ENCODE measurements at regions of chr5 and their contacts with region 1.

Region 1: DNA sequence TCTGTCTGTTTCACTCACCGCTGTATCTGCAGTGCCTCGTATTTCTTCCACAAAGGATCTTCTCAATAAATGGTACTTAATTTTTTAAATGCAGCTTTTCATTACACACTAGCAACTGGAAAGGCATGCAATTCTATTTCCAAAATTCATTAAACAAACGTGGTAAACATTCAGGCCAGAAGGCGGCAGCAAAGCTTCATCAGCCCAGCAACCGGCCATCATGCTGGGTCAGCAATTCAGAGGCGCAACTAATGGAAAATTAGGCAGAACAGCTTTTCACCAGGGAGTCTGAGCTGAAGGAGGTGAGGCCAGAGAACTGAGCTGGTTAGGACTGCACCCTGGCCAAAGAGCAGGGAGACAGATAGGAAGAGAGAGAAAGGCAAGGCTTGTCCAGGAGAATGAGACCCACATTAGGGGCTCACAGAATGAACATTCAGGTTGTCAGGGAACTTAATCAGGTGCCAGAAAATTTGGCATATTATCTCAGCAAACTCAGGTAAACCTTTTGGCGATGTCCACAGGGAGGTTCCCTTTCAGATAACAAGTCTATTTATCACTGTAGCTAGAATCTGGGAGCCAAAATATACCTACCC is 17.7 kb upstream of the RNF180 start:
- DNase-seq: peak in 9 of 10 donors; percentile 28 to 78 (median 66)
- H3K4me3 ChIP-seq: no peak overlapping the region
- H3K27ac ChIP-seq: no peak overlapping the region
- H3K27me3 ChIP-seq: no peaks in the 10 kb centered on the region
- CTCF ChIP-seq: peak; percentile 33 to 85 (median 72)

Region 2: DNA sequence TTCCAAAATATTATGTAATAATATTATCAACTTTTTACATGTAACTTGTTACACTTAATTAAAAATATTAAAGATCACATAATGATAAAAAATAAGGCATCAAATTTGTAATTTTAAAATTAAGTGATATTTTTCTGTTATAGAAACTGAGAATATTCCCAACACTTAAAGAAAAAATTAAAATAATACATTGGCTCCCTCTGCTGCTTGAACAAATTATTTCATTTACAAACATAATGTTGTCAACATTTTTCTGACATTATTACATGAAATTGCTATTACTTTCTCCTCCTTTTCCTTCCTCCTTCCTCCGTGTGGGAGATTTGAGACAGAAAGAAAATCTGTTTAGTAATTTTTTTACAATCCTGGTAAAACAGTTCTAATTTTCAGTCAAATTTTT is 60.0 kb after region 1 on chr5:
- intact Hi-C with region 1: loop called in 1 of 2 experiments (anchors 5 kb)
- DNase-seq: no peak
- H3K4me3 ChIP-seq: no peak overlapping the region
- H3K27ac ChIP-seq: no peak overlapping the region
- H3K27me3 ChIP-seq: no peaks in the 10 kb centered on the region
- CTCF ChIP-seq: peak in 53 of 56 donors; percentile 17 to 69 (median 43)

Region 3: GRCh38 chr5:64612344-64612961 is 464.5 kb after region 1 on chr5:
- intact Hi-C with region 1: loop called in 1 of 2 experiments (anchors 10 kb)
- DNase-seq: peak in 3 of 10 donors; percentile 15 to 50 (median 48)
- H3K4me3 ChIP-seq: no peak overlapping the region
- H3K27ac ChIP-seq: no peak overlapping the region
- H3K27me3 ChIP-seq: peaks cover 0 to 3% (median 0%) of the 10 kb centered on the region in 45 donors
- CTCF ChIP-seq: peak; percentile 45 to 88 (median 74)